IMR-90 (cell line): ENCODE measurements at regions of chr1 and their contacts with region 1.

Region 1: GRCh38 chr1:205321164-205321958 is at the start of gene NUAK2:
- DNase-seq: peak; percentile 90
- ATAC-seq: peak; percentile 92
- H3K4me3 ChIP-seq: peak within 1 kb of the TSS; percentile 94
- H3K27ac ChIP-seq: peak within 1 kb of the TSS; percentile 87
- H3K4me1 ChIP-seq: peaks cover 35% of the 10 kb centered on the region
- H3K27me3 ChIP-seq: no peaks in the 10 kb centered on the region
- CTCF ChIP-seq: peak; percentile 37
- POLR2A ChIP-seq: peak; percentile 94
- RAD21 ChIP-seq: peak; percentile 35
- total RNA-seq, gene NUAK2: 7.2 and 8.1 TPM in 2 replicates

Region 2: DNA sequence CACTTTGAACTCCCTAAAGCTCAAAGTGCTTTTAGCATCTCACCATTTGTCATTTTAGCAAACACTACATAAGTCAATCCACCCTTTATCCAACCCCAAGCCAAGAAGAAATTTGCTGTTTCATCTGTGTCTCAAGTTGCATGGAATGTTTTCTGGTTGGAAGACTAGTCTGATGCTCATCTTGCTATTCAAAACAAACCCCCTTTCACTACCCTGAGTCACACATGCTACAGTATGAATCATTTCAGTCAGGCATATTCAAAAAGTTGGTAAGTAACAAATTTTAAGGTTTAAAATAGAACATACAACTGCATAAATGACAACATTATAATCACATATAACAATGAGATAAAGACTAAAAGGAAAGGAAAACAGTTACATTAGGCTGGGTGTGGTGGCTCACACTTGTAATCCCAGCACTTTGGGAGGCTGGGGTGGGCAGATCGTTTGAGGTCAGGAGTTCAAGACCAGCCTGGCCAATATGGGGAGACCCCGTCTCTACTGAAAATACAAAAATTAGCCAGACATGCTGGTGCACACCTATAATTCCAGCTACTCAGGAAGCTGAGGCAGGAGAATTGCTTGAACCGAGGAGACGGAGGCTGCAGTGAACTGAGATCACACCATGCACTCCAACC is 148.5 kb before region 1 on chr1:
- CTCF ChIA-PET with region 1: no interaction called
- POLR2A ChIA-PET with region 1: no interaction called
- dilution Hi-C with region 1: no loop called
- in situ Hi-C with region 1: no loop called
- intact Hi-C with region 1: loop called (anchors 10 kb)
- DNase-seq: peak; percentile 99
- ATAC-seq: peak; percentile 77
- H3K4me3 ChIP-seq: no peak overlapping the region
- H3K27ac ChIP-seq: peak overlapping the region; percentile 90
- H3K4me1 ChIP-seq: peaks cover 8% of the 10 kb centered on the region
- H3K27me3 ChIP-seq: no peaks in the 10 kb centered on the region
- CTCF ChIP-seq: no peak
- POLR2A ChIP-seq: no peak
- RAD21 ChIP-seq: no peak

Region 3: GRCh38 chr1:205284343-205285144 is 36.8 kb before region 1 on chr1:
- CTCF ChIA-PET with region 1: interaction called, 8 read pairs
- POLR2A ChIA-PET with region 1: interaction called, 3 read pairs
- dilution Hi-C with region 1: no loop called
- in situ Hi-C with region 1: loop called (anchors 5 kb)
- intact Hi-C with region 1: loop called (anchors 2 kb)
- DNase-seq: peak; percentile 99
- ATAC-seq: peak; percentile 97
- H3K4me3 ChIP-seq: no peak overlapping the region
- H3K27ac ChIP-seq: peak overlapping the region; percentile 93
- H3K4me1 ChIP-seq: peaks cover 38% of the 10 kb centered on the region
- H3K27me3 ChIP-seq: no peaks in the 10 kb centered on the region
- CTCF ChIP-seq: 0 out of 2 replicates have a peak, but pooled peaks have one; percentile 18
- POLR2A ChIP-seq: peak; percentile 63
- RAD21 ChIP-seq: peak; percentile 48

Region 4: GRCh38 chr1:205300886-205301821 is 20.2 kb before region 1 on chr1:
- CTCF ChIA-PET with region 1: interaction called, 5 read pairs
- POLR2A ChIA-PET with region 1: no interaction called
- dilution Hi-C with region 1: no loop called
- in situ Hi-C with region 1: no loop called
- intact Hi-C with region 1: loop called (anchors 2 kb)
- DNase-seq: peak; percentile 97
- ATAC-seq: peak; percentile 68
- H3K4me3 ChIP-seq: no peak overlapping the region
- H3K27ac ChIP-seq: peak overlapping the region; percentile 99
- H3K4me1 ChIP-seq: peaks cover 32% of the 10 kb centered on the region
- H3K27me3 ChIP-seq: no peaks in the 10 kb centered on the region
- CTCF ChIP-seq: no peak
- POLR2A ChIP-seq: peak; percentile 41; the same call in 1 of the 2 replicates
- RAD21 ChIP-seq: peak; percentile 33; the same call in 1 of the 2 replicates

Region 5: DNA sequence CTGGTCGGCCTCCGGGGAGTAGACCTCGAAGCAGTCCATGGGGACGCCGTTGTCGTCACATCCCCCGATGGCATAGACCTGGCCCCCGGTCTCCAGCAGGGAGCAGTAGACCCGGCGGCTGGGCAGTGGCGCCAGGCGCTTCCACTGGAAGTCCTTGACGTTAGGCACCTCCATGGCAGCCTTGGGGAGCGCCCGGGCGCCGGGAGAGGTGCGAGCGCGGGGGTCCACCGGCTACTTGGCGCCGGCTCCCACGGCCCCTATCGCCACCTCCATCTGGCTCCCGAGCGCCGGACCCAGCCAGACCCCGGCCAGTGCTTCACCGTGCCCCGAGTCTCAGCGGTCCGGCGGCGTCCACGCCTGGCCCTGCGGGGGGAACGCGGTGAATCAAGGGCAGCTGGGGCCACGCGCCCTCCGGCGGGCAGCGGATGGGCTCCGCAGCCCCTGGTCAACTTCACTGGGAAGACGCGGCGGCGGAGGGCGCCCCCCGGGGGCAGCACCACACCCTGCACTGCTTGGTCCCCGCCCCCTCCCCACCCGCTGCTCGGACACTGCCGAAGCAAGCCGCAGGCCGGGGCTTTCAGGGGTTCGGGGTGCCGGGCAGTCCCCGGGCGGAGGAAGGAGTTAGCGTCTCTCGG is 22.2 kb after region 1 on chr1:
- CTCF ChIA-PET with region 1: no interaction called
- POLR2A ChIA-PET with region 1: no interaction called
- dilution Hi-C with region 1: no loop called
- in situ Hi-C with region 1: no loop called
- intact Hi-C with region 1: no loop called
- DNase-seq: no peak
- ATAC-seq: peak; percentile 42
- H3K4me3 ChIP-seq: no peak overlapping the region
- H3K27ac ChIP-seq: no peak overlapping the region
- H3K4me1 ChIP-seq: no peaks in the 10 kb centered on the region
- H3K27me3 ChIP-seq: peaks cover 83% of the 10 kb centered on the region
- CTCF ChIP-seq: peak; percentile 27; the same call in 1 of the 2 replicates
- POLR2A ChIP-seq: no peak
- RAD21 ChIP-seq: no peak

Region 6: DNA sequence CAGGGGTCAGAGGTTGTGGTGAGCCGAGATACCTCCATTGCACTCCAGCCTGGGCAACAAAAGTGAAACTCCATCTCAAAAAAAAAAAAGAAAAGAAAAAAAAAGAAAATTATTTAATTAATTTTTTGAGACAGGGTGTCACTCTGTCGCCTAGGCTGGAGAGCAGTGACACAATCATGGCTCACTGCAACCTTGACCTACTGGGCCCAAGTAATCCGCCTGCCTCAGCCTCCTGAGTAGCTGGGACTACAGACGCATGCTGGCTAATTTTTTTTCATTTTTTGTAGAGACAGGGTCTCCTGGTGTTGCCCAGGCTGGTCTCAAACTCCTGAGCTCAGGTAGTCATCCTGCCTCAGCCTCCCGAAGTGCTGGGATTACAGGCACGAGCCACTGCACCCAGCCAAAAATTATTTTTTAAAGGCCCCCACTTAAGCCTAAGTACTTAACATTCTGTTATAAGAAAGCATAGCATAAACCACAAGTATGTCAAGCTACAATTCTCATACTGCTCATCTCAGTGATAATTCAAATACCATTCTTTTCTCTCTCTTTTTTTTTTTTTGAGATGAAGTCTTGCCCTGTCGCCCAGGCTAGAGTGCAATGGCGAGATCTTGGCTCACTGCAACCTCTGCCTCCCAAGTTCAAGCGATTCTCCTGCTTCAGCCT is 408.7 kb after region 1 on chr1:
- CTCF ChIA-PET with region 1: no interaction called
- POLR2A ChIA-PET with region 1: no interaction called
- dilution Hi-C with region 1: no loop called
- in situ Hi-C with region 1: no loop called
- intact Hi-C with region 1: no loop called
- DNase-seq: peak; percentile 26
- ATAC-seq: peak; percentile 79
- H3K4me3 ChIP-seq: no peak overlapping the region
- H3K27ac ChIP-seq: no peak overlapping the region
- H3K4me1 ChIP-seq: peaks cover 2% of the 10 kb centered on the region
- H3K27me3 ChIP-seq: no peaks in the 10 kb centered on the region
- CTCF ChIP-seq: no peak
- POLR2A ChIP-seq: no peak
- RAD21 ChIP-seq: no peak